CD4-positive, alpha-beta T cell (primary cell): ENCODE measurements at regions of chr14 and their contacts with region 1.

Region 1: DNA sequence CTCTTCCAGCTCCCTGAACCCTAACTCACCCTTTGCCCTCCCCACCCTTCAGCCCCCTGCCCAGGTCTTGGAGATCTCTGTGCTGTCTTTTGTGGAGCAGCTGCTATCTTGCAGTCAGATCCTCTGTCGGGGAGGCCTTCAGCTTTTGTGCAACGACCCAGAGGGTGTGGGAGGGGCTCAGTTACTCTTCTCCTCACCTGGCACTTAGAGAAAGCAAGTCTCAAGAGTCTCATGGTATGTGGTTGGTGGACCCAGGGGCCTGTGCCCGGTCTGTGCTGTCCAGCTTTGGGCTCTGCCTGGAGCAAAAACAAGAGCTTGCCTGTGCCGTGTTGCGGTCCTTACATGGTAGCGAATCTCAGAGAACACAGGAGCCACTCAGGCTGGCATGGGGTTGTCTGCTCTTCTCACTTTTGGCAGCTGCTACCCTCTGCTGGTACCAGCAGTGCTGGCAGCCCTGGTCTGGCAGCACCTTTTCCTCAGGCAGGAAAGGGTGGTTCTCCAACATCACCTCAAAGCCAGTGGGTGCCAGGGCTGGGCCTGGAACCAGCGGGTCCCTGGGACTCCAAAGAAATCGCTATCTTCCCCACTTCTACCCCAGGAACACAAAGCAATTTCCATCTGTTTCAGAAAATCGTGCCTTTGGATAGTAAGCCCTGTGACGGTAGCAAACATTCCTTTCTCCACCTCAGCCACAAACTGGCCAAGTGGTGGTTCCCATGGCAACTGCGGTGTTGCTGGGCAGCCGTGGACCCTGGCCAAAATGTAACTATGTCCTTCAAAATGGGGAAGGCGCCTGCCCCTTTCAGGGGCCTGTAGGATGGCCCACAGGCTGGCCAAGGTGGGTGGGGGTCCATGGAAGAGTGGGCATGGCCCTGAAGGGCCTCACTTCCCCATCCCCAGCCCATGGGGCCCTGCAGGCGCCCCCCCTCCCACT is 90.0 kb downstream of the RIN3 start:
- DNase-seq: peak; percentile 45 to 80 (median 60)
- ATAC-seq: peak; percentile 99
- H3K4me3 ChIP-seq: no peak overlapping the region
- H3K4me3 Mint-ChIP-seq: peak overlapping the region; percentile 83
- H3K27ac ChIP-seq: no peak overlapping the region
- H3K27ac Mint-ChIP-seq: peak overlapping the region; percentile 77
- H3K4me1 ChIP-seq: peaks cover 19% of the 10 kb centered on the region
- H3K4me1 Mint-ChIP-seq: peaks cover 35% of the 10 kb centered on the region
- H3K27me3 ChIP-seq: no peaks in the 10 kb centered on the region
- H3K27me3 Mint-ChIP-seq: no peaks in the 10 kb centered on the region
- CTCF ChIP-seq: peak; percentile 70

Region 2: DNA sequence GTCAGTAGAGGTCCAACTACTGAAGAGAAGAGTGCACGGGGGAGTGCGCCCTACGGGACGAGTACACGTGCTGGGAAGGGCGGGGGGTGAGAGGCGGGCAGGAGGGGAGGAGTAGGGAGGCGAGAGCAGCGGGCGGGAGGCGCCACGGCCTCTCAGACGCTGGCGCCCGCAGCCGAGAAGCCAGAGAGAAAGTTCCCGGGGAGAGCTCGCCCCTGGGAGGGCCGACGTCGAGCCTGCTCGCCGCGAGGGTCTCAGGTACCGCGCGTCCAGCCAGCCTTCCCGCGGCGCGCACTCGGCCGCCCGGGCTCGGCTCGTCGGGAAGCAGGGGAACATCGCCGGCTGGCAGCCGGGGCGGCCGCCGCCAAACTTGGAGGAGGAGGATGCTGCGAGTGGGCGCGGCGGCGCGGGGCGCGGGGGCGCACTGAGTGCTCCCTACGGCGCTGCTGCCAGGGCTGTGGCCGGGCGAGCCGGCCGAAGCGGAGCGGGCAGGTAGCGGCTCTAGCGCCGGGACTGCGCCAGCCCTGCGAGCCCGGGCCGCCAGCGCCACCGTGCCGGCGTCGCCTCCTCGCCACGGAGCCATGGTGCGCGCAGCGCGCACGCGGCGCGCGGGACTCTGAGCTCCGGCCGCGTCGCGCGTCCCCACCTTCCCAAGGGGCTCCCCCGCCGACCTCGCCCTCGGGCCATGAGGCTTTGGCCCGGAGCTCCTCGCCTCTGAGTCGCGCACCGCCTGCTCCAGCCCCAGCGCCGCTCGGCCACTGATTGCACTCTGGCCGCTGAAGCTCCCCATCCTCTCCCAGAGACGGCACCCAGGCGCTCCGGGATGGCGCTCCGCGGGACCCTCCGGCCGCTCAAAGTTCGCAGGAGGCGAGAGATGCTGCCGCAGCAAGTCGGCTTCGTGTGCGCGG is 280.3 kb before region 1 on chr14 and contains the start of gene SLC24A4:
- CTCF ChIA-PET with region 1: no interaction called
- POLR2A ChIA-PET with region 1: no interaction called
- intact Hi-C with region 1: loop called (anchors 5 to 10 kb)
- DNase-seq: peak in 1 of 14 experiments; percentile 14
- ATAC-seq: no peak
- H3K4me3 ChIP-seq: peak within 1 kb of the TSS; percentile 5
- H3K4me3 Mint-ChIP-seq: peak within 1 kb of the TSS; percentile 72
- H3K27ac ChIP-seq: no peak within 1 kb of the TSS
- H3K27ac Mint-ChIP-seq: no peak within 1 kb of the TSS
- H3K4me1 ChIP-seq: peaks cover 7% of the 10 kb centered on the region
- H3K4me1 Mint-ChIP-seq: no peaks in the 10 kb centered on the region
- H3K27me3 ChIP-seq: peaks cover 33 to 42% of the 10 kb centered on the region in 2 experiments
- H3K27me3 Mint-ChIP-seq: peaks cover 74% of the 10 kb centered on the region
- CTCF ChIP-seq: no peak
- total RNA-seq, gene SLC24A4: 0.11 to 0.19 TPM

Region 3: GRCh38 chr14:92513204-92513973 is 90.2 kb before region 1 on chr14 and contains the start of gene RIN3:
- CTCF ChIA-PET with region 1: no interaction called
- POLR2A ChIA-PET with region 1: no interaction called
- intact Hi-C with region 1: loop called in 1 of 2 experiments (anchors 5 kb)
- DNase-seq: peak in 11 of 14 experiments; percentile 19 to 69 (median 29)
- ATAC-seq: peak; percentile 57
- H3K4me3 ChIP-seq: peak within 1 kb of the TSS; percentile 82
- H3K4me3 Mint-ChIP-seq: peak within 1 kb of the TSS; percentile 78
- H3K27ac ChIP-seq: peak within 1 kb of the TSS in 1 of 2 donors; percentile 21
- H3K27ac Mint-ChIP-seq: peak within 1 kb of the TSS; percentile 2
- H3K4me1 ChIP-seq: peaks cover 50% of the 10 kb centered on the region
- H3K4me1 Mint-ChIP-seq: peaks cover 41% of the 10 kb centered on the region
- H3K27me3 ChIP-seq: no peaks in the 10 kb centered on the region
- H3K27me3 Mint-ChIP-seq: no peaks in the 10 kb centered on the region
- CTCF ChIP-seq: no peak
- total RNA-seq, gene RIN3: 67.9 to 72.2 TPM